Esophagus muscularis mucosa (tissue), 4 donors: ENCODE measurements at regions of chr10 and their contacts with region 1.

Region 1: DNA sequence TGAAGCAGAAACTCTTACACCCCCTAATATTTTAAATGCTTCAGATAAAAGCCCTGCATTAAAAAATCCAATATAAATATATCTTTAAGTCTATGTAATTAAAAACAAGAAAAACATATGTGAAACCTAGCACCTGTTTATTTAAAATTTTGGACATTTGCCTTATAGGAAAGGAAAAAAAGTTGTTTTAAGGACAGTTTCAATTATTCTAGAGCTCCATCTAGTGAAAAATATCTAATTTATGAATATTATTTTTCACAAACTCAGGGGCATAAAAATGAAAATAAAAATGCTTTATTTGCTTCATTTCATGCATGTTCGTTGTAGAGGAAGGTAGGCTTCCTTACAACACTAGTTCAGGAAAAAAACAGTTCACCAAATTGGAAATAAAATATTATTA is 26.1 kb downstream of the ENKUR start:
- DNase-seq: no peak
- H3K4me3 ChIP-seq: no peak overlapping the region
- H3K27ac ChIP-seq: no peak overlapping the region
- H3K4me1 ChIP-seq: peaks cover 0 to 3% (median 0%) of the 10 kb centered on the region in 4 donors
- H3K27me3 ChIP-seq: peaks cover 0 to 3% (median 0%) of the 10 kb centered on the region in 4 donors
- CTCF ChIP-seq: peak; percentile 20 to 30 (median 22)
- EP300 ChIP-seq: no peak
- POLR2A ChIP-seq: no peak

Region 2: DNA sequence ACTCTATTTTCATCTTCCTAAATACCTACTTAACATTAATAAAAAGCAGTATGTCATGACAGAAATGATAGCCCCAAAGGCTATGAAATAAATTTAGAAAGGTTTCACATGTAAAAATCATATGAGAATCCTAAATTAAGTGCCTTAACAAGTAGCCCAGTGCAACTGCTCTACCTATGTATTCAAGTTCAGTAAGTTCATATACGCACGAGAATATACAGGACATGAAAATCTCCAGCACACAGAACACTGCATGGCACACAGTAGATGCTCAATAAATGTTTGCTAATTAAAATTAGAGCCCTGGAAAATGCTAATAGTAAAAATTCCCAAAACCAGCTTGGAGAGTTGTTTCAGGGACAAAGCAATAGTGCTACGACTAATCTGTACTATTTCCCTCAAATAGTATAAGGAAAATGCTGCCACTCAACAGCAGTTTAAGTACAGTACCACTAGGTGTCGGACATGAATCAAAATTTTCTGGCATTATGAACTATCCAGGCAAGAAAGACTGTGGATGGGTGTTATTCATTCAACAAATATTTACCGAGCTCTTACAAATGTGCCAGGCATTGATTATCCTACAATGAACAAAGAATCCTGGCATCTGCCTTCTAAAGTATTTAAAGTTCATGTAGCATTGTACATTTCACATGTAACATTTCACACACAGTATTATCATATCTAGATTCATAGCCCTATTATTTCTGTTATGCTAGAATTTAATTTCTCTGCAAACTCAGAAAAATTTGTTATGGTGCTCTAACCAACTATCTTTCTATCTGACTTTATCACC is 347.0 kb before region 1 on chr10:
- intact Hi-C with region 1: loop called (anchors 2 kb)
- DNase-seq: no peak
- H3K4me3 ChIP-seq: no peak overlapping the region
- H3K27ac ChIP-seq: no peak overlapping the region
- H3K4me1 ChIP-seq: peaks cover 3 to 14% (median 10%) of the 10 kb centered on the region in 4 donors
- H3K27me3 ChIP-seq: no peaks in the 10 kb centered on the region
- CTCF ChIP-seq: peak; percentile 67 to 85 (median 76)
- EP300 ChIP-seq: no peak
- POLR2A ChIP-seq: no peak

Region 3: DNA sequence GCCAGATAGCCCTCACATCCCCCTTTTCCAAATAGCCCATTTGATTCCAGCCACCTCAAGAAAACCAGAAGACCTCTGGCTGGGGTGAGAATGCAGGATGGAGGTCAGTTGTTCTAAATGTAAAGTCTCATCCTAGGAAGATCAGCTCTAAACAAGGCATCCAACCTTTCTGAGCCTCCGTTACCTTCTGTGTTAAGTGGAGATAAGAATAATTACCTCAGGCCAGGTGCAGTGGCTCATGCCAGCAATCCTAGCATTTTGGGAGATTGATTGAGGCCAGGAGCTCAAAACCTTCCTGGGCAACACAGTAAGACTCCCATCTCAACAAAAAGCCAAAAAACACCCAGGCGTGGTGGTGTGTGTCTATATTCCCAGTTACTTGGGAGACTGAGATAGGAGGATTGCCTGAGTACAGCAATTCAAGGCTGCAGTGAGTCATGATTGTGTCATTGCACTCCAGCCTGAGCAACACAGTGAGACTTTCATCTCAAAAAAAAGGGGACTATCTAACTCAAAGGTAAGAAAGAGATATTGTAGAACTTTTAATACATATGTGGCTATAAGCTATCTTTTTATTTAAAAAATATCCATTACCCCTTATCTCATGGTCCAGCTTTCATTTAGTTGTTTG is 81.0 kb before region 1 on chr10:
- intact Hi-C with region 1: no loop called
- DNase-seq: no peak
- H3K4me3 ChIP-seq: no peak overlapping the region
- H3K27ac ChIP-seq: no peak overlapping the region
- H3K4me1 ChIP-seq: no peaks in the 10 kb centered on the region
- H3K27me3 ChIP-seq: no peaks in the 10 kb centered on the region
- CTCF ChIP-seq: no peak
- EP300 ChIP-seq: no peak
- POLR2A ChIP-seq: no peak